PC-3 (cell line): ENCODE measurements at regions of chr14 and their contacts with region 1.

Region 1: DNA sequence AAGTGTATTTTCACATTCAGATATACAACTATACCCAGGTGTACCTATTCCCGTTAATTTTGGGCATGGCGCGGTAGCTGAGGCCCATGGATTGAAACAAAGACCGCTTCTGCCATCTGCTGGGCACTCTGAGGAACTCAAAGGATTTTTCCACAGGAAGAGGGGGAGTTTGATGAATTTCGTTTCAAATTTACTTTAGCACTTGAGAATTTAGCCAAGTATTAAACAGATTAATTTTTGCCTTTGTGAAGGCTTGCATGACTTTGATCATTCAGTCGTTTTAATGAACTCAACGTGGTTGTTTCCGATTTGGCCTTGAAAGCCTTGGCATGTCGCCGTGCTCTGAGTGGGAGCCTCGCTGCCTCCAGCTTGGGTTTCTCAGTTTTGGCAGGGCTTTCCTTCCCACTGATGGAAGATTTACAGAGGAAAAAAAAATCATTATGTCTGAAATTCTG is 153.2 kb upstream of the DDHD1 start:
- DNase-seq: peak; percentile 69
- ATAC-seq: peak; percentile 88
- H3K4me3 ChIP-seq: peak overlapping the region; percentile 86
- H3K27ac ChIP-seq: no peak overlapping the region
- H3K4me1 ChIP-seq: peaks cover 8% of the 10 kb centered on the region; the same call in 1 of the 2 replicates
- H3K27me3 ChIP-seq: no peaks in the 10 kb centered on the region
- CTCF ChIP-seq: peak; percentile 94

Region 2: DNA sequence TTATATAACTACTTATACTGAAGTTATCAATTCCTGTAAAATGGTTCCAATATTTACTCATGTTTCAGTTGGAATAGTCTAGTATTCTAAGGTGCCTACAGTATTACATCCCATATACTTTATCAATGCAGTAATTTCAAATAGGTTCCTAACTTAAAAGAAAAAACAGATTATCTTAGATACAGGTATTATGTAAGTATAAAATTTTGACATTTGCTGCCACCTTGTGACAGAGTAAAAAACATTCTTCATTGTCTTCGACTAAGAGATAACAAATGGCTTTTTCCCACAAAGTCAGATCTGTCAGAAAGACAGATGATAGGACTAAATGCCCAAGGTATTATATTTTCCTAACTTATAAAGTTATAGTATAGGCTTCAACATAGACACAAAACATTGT is 832.7 kb before region 1 on chr14:
- CTCF ChIA-PET with region 1: no interaction called
- POLR2A ChIA-PET with region 1: no interaction called
- intact Hi-C with region 1: loop called (anchors 5 kb)
- DNase-seq: peak; percentile 78
- ATAC-seq: peak; percentile 79
- H3K4me3 ChIP-seq: no peak overlapping the region
- H3K27ac ChIP-seq: no peak overlapping the region
- H3K4me1 ChIP-seq: no peaks in the 10 kb centered on the region
- H3K27me3 ChIP-seq: no peaks in the 10 kb centered on the region
- CTCF ChIP-seq: peak; percentile 83

Region 3: DNA sequence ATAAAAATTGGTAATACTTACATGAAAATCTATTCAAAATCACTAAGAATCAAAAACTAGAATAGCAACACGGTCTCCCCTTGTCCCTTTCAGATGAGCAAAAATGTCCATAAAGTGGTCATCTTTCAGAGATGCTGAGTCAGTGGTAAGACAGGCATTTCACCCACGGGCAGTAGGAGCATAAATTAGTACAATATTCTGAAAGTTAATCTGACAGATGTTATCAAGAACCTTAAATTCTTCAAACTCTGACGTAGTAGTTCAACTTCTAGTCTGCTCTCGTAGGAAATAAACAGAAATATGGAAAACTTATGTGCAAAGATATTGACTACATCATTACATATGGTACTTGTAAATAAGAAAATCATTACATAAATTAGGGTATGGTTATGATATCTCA is 481.8 kb before region 1 on chr14:
- CTCF ChIA-PET with region 1: no interaction called
- POLR2A ChIA-PET with region 1: no interaction called
- intact Hi-C with region 1: loop called (anchors 1 kb)
- DNase-seq: no peak
- ATAC-seq: no peak
- H3K4me3 ChIP-seq: no peak overlapping the region
- H3K27ac ChIP-seq: no peak overlapping the region
- H3K4me1 ChIP-seq: no peaks in the 10 kb centered on the region
- H3K27me3 ChIP-seq: no peaks in the 10 kb centered on the region
- CTCF ChIP-seq: no peak

Region 4: GRCh38 chr14:53055003-53055402 is 251.3 kb before region 1 on chr14:
- CTCF ChIA-PET with region 1: interaction called, 4 read pairs
- POLR2A ChIA-PET with region 1: no interaction called
- intact Hi-C with region 1: loop called (anchors 1 kb)
- DNase-seq: peak; percentile 78
- ATAC-seq: peak; percentile 95
- H3K4me3 ChIP-seq: no peak overlapping the region
- H3K27ac ChIP-seq: no peak overlapping the region
- H3K4me1 ChIP-seq: peaks cover 1% of the 10 kb centered on the region; the same call in 1 of the 2 replicates
- H3K27me3 ChIP-seq: no peaks in the 10 kb centered on the region
- CTCF ChIP-seq: peak; percentile 94

Region 5: GRCh38 chr14:53295985-53296582 is 10.2 kb before region 1 on chr14:
- CTCF ChIA-PET with region 1: interaction called, 16 read pairs
- POLR2A ChIA-PET with region 1: no interaction called
- intact Hi-C with region 1: no loop called
- DNase-seq: peak; percentile 67
- ATAC-seq: peak; percentile 71
- H3K4me3 ChIP-seq: no peak overlapping the region
- H3K27ac ChIP-seq: no peak overlapping the region
- H3K4me1 ChIP-seq: no peaks in the 10 kb centered on the region
- H3K27me3 ChIP-seq: no peaks in the 10 kb centered on the region
- CTCF ChIP-seq: peak; percentile 85

Region 6: DNA sequence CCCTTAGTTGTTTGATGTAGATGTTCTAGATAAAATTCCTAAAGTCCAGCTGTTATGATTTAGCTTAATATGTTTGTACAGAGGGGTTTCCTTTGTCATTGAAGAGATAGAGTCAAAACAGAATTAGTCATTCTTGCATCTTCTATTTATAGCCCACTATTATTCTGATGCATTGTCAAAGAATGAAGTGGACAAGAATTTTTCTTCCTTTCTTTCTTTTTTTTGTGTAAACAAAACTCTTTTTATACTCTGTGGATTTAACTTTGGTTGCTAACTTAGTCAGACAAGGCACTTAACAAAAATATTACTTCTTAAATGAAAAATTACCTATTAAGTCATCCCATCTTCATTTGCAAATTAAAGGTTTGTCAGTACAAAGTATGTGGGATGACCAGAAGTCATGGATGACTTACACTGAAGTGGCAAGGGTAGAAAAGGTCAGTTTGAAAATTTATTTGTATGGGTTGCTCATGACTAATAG is 62.5 kb after region 1 on chr14:
- CTCF ChIA-PET with region 1: interaction called, 10 read pairs
- POLR2A ChIA-PET with region 1: interaction called, 8 read pairs
- intact Hi-C with region 1: loop called (anchors 2 kb)
- DNase-seq: peak; percentile 70
- ATAC-seq: peak; percentile 81
- H3K4me3 ChIP-seq: no peak overlapping the region
- H3K27ac ChIP-seq: peak overlapping the region; percentile 14; the same call in 1 of the 2 replicates
- H3K4me1 ChIP-seq: peaks cover 35% of the 10 kb centered on the region
- H3K27me3 ChIP-seq: no peaks in the 10 kb centered on the region
- CTCF ChIP-seq: no peak

Region 7: DNA sequence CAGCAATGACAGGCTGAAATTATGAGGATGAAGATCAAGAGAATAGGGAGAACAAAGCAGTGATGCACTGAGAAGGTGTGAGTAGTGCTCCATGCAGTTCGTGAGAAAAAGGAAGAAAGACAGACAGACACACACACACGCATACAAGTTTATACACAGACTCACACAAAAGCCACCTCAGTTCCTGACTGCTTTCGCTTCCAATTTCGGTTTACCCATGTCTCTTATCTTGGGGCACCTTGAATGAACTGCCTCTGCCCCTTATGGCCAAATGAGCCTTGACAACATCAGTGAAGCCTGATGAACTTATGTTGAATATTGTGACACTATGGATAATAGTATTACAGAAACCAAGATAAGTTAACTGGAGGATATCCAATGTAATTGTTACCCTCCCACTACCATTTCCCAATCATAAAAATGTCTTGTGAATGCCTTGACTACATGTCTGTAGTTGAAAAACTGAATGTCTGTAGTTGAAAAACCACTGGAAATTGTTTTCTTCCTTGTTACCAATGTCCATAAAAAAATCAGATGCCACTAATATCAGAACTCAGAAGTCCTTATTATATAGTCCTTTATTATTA is 227.2 kb after region 1 on chr14:
- CTCF ChIA-PET with region 1: no interaction called
- POLR2A ChIA-PET with region 1: no interaction called
- intact Hi-C with region 1: loop called (anchors 2 kb)
- DNase-seq: no peak
- ATAC-seq: no peak
- H3K4me3 ChIP-seq: no peak overlapping the region
- H3K27ac ChIP-seq: peak overlapping the region; percentile 94
- H3K4me1 ChIP-seq: peaks cover 35% of the 10 kb centered on the region
- H3K27me3 ChIP-seq: no peaks in the 10 kb centered on the region
- CTCF ChIP-seq: no peak